Right ventricle myocardium inferior (tissue), 1 donor: ENCODE measurements at regions of chr2 and their contacts with region 1.

Region 1: GRCh38 chr2:163191372-163191771 is 352.8 kb upstream of the KCNH7 start:
- DNase-seq: no peak
- ATAC-seq: no peak

Region 2: DNA sequence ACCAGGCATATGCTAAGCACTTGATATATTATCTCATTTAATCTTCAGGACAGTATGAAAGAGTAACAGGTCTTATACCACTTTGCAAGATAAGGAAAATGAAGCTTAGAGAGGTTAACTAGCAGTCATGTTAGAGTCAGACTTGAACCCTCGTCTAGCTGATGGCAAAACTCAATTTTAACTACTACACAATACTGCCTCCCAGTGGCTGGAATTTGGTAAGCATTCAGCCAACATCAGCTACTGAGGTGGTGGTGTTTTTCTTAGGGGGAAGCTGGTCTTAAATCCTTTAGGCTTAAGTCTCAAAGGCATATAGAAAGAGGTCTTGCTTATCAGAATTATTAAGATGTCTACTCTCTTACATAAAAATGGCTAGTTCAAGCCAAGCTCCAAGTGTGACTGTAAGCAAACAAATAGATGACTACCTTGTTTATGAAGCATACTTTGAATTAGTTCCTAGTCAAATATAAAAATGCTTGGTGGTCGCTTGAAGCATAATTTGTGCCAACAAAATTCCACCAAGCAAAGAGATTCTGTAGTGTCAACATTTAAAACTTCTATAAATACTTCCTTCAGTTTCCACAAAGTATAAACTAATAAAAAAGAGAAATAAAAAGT is 869.9 kb after region 1 on chr2:
- intact Hi-C with region 1: loop called (anchors 10 kb)
- DNase-seq: no peak
- ATAC-seq: no peak

Region 3: DNA sequence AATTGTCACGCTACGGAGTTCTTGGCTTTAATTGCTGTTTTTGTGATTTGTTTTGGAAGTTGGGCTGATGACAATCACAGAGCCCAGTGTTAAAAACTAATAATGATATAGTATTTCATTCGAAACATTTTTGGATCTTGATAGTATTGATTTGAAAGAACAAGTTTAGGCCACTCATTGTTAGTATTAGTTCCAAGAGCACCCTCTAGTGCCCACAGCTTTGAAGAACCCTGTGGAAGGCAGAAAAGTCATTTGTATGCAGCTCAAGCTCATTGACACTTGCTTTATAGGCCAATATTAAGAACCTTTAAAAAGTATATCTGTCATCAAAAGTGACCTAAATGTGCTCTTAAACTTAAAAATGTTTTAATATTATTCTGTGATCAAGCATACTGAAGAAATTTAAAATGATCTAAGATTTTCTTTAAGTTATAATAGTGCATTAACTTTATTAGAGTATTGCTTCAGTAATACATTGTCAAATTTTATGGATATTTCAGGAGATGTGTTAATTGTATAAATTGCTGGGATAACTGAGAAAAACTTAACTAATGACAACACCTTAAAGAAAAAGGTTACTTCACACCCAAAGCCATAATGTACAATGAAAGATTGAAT is 1238.9 kb after region 1 on chr2:
- intact Hi-C with region 1: loop called (anchors 5 kb)
- DNase-seq: no peak
- ATAC-seq: no peak

Region 4: GRCh38 chr2:164538240-164538866 is 1347.0 kb after region 1 on chr2:
- intact Hi-C with region 1: loop called (anchors 5 kb)
- DNase-seq: no peak
- ATAC-seq: peak; percentile 50

Region 5: GRCh38 chr2:164589522-164589921 is 1398.2 kb after region 1 on chr2:
- intact Hi-C with region 1: no loop called
- DNase-seq: no peak
- ATAC-seq: no peak